ENCODE measurements at regions of chr5 and their contacts with region 1.

Region 1: GRCh38 chr5:317086-317811 is 4.3 kb upstream of the AHRR start:
- DNase-seq: peak; percentile 46
- H3K4me3 ChIP-seq: no peak overlapping the region
- H3K27ac ChIP-seq: no peak overlapping the region
- H3K4me1 ChIP-seq: peaks cover 8% of the 10 kb centered on the region
- H3K27me3 ChIP-seq: peaks cover 2 to 8% of the 10 kb centered on the region in 2 experiments
- CTCF ChIP-seq: peak; percentile 74 to 90
- POLR2A ChIP-seq: no peak

Region 2: GRCh38 chr5:188488-189481 is 128.5 kb before region 1 on chr5:
- CTCF ChIA-PET with region 1: interaction called, 17 read pairs
- POLR2A ChIA-PET with region 1: no interaction called
- dilution Hi-C with region 1: no loop called
- intact Hi-C with region 1: loop called (anchors 5 kb)
- DNase-seq: peak; percentile 76
- H3K4me3 ChIP-seq: no peak overlapping the region
- H3K27ac ChIP-seq: no peak overlapping the region
- H3K4me1 ChIP-seq: no peaks in the 10 kb centered on the region
- H3K27me3 ChIP-seq: peaks cover 5 to 8% of the 10 kb centered on the region in 2 experiments
- CTCF ChIP-seq: peak; percentile 92 to 99
- POLR2A ChIP-seq: no peak

Region 3: GRCh38 chr5:424301-425110 is 107.3 kb after region 1 on chr5:
- CTCF ChIA-PET with region 1: interaction called, 94 read pairs
- POLR2A ChIA-PET with region 1: no interaction called
- dilution Hi-C with region 1: no loop called
- intact Hi-C with region 1: no loop called
- DNase-seq: no peak
- H3K4me3 ChIP-seq: no peak overlapping the region
- H3K27ac ChIP-seq: no peak overlapping the region
- H3K4me1 ChIP-seq: no peaks in the 10 kb centered on the region
- H3K27me3 ChIP-seq: no peaks in the 10 kb centered on the region
- CTCF ChIP-seq: no peak
- POLR2A ChIP-seq: no peak

Region 4: GRCh38 chr5:446864-447263 is 129.6 kb after region 1 on chr5:
- CTCF ChIA-PET with region 1: interaction called, 38 read pairs
- POLR2A ChIA-PET with region 1: no interaction called
- dilution Hi-C with region 1: no loop called
- intact Hi-C with region 1: no loop called
- DNase-seq: peak; percentile 32
- H3K4me3 ChIP-seq: no peak overlapping the region
- H3K27ac ChIP-seq: no peak overlapping the region
- H3K4me1 ChIP-seq: peaks cover 10% of the 10 kb centered on the region
- H3K27me3 ChIP-seq: no peaks in the 10 kb centered on the region
- CTCF ChIP-seq: peak; percentile 46 to 56
- POLR2A ChIP-seq: no peak

Region 5: GRCh38 chr5:671459-672328 is 354.4 kb after region 1 on chr5:
- CTCF ChIA-PET with region 1: no interaction called
- POLR2A ChIA-PET with region 1: no interaction called
- dilution Hi-C with region 1: no loop called
- intact Hi-C with region 1: loop called (anchors 10 kb)
- DNase-seq: peak; percentile 52
- H3K4me3 ChIP-seq: no peak overlapping the region
- H3K27ac ChIP-seq: no peak overlapping the region
- H3K4me1 ChIP-seq: no peaks in the 10 kb centered on the region
- H3K27me3 ChIP-seq: no peaks in the 10 kb centered on the region
- CTCF ChIP-seq: peak; percentile 83 to 95
- POLR2A ChIP-seq: no peak